Dorsolateral prefrontal cortex (tissue), 120 donors: ENCODE measurements at regions of chr13 and their contacts with region 1.

Region 1: GRCh38 chr13:23707674-23708073 is 137.5 kb downstream of the TNFRSF19 start:
- DNase-seq: no peak
- H3K4me3 ChIP-seq: no peak overlapping the region
- H3K27ac ChIP-seq: no peak overlapping the region
- H3K27me3 ChIP-seq: no peaks in the 10 kb centered on the region
- CTCF ChIP-seq: peak in 38 of 56 donors; percentile 8 to 55 (median 30)

Region 2: DNA sequence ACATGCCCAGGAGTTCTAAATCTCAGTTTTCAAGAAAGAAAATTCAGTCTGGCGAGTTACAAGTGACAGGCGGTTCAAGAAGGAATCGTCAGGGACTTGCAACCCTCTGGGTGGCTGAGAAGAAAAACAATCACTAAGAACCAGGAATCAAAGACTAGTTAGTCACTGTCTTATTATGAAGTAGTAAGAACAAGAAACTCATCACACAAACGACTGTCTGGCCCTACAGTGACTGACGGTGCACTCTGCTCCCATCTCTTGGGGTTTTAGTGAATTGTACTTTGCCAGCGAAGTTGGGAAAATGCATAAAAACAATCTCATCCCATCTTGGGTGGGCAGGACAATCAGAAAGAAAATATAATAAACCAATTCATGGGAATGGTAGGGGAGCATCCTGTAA is 210.5 kb before region 1 on chr13:
- intact Hi-C with region 1: loop called in 1 of 2 experiments (anchors 10 kb)
- DNase-seq: no peak
- H3K4me3 ChIP-seq: no peak overlapping the region
- H3K27ac ChIP-seq: no peak overlapping the region
- H3K27me3 ChIP-seq: peaks cover 0 to 25% (median 4%) of the 10 kb centered on the region in 45 donors
- CTCF ChIP-seq: no peak